Right ventricle myocardium inferior (tissue), 1 donor: ENCODE measurements at regions of chr7 and their contacts with region 1.

Region 1: GRCh38 chr7:136405931-136406777 is 429.0 kb upstream of the MTPN start:
- DNase-seq: no peak
- ATAC-seq: peak; percentile 63

Region 2: DNA sequence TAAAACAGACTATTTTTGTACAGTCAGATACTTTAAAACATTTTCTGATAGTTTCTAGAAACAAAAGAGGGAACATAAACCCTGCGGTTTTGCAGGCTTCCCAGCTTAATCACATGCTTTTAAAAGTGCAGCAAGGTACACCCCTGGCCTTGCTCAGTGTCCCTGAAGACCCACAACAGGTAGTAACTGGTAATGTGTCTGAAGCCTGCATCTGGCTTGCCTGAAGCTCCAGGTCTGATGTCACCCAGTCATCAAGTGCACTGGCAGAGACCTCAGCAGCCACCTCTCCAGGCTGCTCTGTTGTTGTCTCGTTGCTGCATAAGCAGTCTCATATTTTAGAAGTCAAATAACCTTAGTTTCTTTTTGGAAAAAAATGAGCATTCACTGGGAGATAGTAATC is 52.9 kb before region 1 on chr7:
- intact Hi-C with region 1: no loop called
- DNase-seq: no peak
- ATAC-seq: no peak

Region 3: GRCh38 chr7:136868496-136869000 is 462.4 kb after region 1 on chr7 and contains the start of gene CHRM2:
- intact Hi-C with region 1: loop called (anchors 10 kb)
- DNase-seq: no peak
- ATAC-seq: peak; percentile 47
- total RNA-seq, gene CHRM2: 70.4 TPM

Region 4: DNA sequence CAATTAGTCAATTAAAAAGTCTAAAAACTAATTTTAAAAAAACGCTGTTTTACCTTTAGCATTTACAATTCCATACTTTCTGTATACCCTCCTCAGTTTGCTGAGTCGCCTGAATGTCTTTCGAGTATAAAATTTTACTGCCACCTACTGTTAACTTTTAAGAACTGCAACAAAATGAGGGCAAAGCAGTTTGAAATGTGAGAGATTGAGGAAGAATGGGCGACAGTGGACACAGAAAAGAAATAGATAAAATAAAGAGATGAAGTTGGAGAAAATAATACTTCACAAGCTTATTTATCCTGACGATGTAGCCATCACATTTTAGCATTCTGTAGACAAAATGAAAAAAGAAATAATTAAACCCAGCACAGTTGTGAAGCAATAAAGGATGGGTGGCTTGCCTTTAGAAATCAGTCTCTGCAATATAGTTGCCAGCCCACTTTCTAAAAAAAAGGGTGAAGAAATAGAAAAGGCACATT is 1048.1 kb after region 1 on chr7:
- intact Hi-C with region 1: loop called (anchors 10 kb)
- DNase-seq: no peak
- ATAC-seq: peak; percentile 59

Region 5: GRCh38 chr7:137592232-137592896 is 1186.2 kb after region 1 on chr7:
- intact Hi-C with region 1: loop called (anchors 5 kb)
- DNase-seq: no peak
- ATAC-seq: peak; percentile 93